ENCODE measurements at regions of chr2 and their contacts with region 1.

Region 1: DNA sequence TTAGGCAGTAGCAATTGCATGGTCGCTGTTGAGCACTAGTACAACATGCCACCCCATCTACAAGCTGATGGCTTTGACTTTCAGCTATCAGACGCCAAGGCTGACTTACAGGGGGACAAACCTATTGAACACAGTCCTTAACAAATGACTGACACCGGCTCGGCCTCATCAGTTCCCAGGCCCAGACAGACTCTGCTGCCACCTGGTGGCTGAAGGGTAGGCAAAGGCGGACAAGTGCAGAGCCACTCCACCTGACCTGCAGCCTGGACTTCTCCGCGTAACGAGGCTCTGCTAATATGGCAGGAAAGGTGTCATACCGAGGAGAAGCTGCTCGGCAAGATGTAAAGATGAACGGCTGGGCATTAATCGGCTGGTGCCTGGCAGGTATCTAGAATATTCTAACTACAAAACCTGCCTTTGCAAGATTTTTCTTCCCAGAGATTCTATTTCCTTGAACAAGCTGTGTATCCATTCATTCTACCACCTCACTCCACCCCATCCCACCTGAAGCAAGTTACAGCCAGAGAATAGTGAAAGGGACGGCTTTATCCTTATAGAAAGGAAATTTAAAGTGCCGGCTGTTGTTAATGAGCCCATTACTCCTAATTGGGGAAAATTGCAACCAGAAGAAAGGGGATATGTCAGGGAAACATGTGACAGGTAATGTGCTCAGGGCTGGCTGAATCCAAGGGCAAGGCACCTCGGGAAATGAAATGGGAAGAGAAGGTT is 67.4 kb downstream of the STEAP3 start:
- DNase-seq: peak; percentile 56
- H3K4me3 ChIP-seq: no peak overlapping the region
- H3K27ac ChIP-seq: no peak overlapping the region
- H3K4me1 ChIP-seq: no peaks in the 10 kb centered on the region
- H3K27me3 ChIP-seq: no peaks in the 10 kb centered on the region
- CTCF ChIP-seq: peak; percentile 57 to 85
- POLR2A ChIP-seq: no peak

Region 2: DNA sequence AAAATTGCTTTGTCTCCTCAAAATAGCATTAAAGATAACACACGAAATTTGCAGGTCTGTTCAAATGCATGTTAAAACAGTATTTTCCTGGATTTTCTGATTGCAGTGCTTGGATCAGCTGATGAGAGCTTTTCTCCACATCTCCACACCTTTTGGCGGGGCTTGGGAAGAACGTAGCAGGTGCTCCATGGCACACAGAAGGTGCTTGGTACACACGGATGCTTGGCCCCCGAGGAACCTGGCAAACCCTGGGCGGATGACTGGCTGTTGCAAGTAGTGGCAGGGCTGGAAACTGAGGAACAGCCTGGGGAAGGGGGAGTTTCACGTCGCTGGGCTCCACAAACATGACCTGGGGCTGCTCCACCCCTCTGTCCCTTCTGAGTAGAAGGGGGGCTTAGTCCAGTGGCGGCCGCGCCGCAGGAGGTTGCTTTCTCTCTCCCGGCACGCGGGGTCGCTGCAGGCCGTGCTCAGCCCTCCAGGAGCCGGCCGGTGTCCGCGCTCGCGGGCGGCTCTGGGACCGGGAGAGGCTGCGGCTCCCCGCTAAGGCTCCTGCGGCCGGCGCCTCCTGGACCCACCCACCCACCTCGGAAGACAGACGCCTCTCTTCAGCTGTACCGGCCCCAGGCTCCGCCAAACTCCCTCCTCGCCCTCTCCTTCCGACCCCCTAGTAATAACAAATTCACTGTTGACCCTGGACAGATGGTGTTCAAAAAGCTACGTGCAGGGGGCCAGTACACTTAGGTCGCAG is 279.7 kb before region 1 on chr2:
- CTCF ChIA-PET with region 1: interaction called, 14 read pairs
- POLR2A ChIA-PET with region 1: no interaction called
- dilution Hi-C with region 1: no loop called
- intact Hi-C with region 1: loop called (anchors 1 kb)
- DNase-seq: peak; percentile 10
- H3K4me3 ChIP-seq: no peak overlapping the region
- H3K27ac ChIP-seq: no peak overlapping the region
- H3K4me1 ChIP-seq: no peaks in the 10 kb centered on the region
- H3K27me3 ChIP-seq: no peaks in the 10 kb centered on the region
- CTCF ChIP-seq: peak; percentile 31 to 64
- POLR2A ChIP-seq: no peak

Region 3: GRCh38 chr2:119028327-119029174 is 262.5 kb before region 1 on chr2:
- CTCF ChIA-PET with region 1: no interaction called
- POLR2A ChIA-PET with region 1: no interaction called
- dilution Hi-C with region 1: no loop called
- intact Hi-C with region 1: loop called (anchors 1 kb)
- DNase-seq: peak; percentile 4
- H3K4me3 ChIP-seq: no peak overlapping the region
- H3K27ac ChIP-seq: no peak overlapping the region
- H3K4me1 ChIP-seq: no peaks in the 10 kb centered on the region
- H3K27me3 ChIP-seq: no peaks in the 10 kb centered on the region
- CTCF ChIP-seq: peak; percentile 25 to 33
- POLR2A ChIP-seq: no peak

Region 4: DNA sequence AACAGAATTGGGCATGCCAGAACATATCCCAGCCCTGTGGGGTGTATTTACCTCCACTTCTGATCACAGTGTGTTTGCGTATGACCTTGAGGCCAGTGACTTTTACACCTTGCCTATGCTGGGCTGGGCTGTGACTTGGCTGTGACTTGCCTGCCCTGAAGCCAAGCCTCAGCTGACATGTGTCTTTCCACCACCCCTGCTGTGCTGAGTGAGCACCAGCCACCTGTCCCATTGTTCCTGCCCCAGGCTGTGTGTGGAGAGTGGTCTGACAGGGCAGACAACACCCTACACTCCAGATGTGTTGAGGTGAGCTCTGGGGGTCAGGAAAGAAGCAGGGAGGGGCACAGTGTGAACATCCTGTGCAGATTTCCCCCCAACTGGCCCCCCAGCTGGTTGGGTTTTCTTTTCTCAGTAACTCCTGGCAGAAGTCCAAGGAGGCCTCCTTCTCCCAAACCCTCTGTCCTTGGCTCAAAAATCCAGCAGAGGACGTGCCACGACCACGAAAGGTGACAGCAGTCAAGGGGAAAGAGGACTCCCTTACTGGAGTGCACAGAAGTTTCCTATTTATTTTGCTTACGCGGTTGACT is 72.5 kb before region 1 on chr2:
- CTCF ChIA-PET with region 1: no interaction called
- POLR2A ChIA-PET with region 1: no interaction called
- dilution Hi-C with region 1: no loop called
- intact Hi-C with region 1: loop called (anchors 2 kb)
- DNase-seq: peak; percentile 16
- H3K4me3 ChIP-seq: no peak overlapping the region
- H3K27ac ChIP-seq: no peak overlapping the region
- H3K4me1 ChIP-seq: peaks cover 2% of the 10 kb centered on the region
- H3K27me3 ChIP-seq: no peaks in the 10 kb centered on the region
- CTCF ChIP-seq: peak in 1 of 2 donors; percentile 11
- POLR2A ChIP-seq: no peak

Region 5: DNA sequence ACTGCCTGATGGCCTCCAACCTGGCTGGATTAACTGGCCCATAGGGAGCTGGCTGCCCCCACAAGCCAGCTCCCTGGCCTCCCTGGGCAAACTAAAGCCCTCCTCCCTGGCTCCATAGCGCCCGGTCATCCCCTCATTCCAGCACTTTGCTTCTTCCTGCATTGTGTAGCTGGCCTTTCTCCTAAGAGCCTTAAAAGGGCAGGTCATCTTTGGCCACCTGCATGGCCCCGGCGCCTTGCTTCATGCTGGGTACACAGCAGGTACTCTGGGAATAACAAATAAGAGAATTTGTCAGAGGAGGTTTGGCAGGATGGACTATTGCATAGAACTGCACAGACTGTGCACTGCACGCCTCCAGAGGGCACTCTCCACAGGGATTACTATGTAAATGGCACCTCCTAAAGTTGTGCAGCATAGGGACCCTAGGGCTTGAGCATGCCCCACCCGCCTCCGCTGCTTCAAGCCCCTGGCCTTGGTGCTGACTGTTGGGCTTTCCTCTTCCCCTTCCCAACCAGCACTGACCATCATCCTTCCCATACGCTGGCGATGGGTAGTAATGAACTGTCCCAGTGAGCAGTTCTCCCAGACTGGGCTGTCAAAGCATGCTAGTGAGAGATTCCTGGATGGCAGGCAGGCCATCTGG is 56.5 kb before region 1 on chr2:
- CTCF ChIA-PET with region 1: interaction called, 14 read pairs
- POLR2A ChIA-PET with region 1: no interaction called
- dilution Hi-C with region 1: no loop called
- intact Hi-C with region 1: loop called (anchors 5 kb)
- DNase-seq: peak; percentile 30
- H3K4me3 ChIP-seq: no peak overlapping the region
- H3K27ac ChIP-seq: no peak overlapping the region
- H3K4me1 ChIP-seq: no peaks in the 10 kb centered on the region
- H3K27me3 ChIP-seq: no peaks in the 10 kb centered on the region
- CTCF ChIP-seq: peak; percentile 43 to 58
- POLR2A ChIP-seq: no peak

Measured in endothelial cell of umbilical vein (primary cell).